Prostate gland (tissue), 2 donors: ENCODE measurements at regions of chr14 and their contacts with region 1.

Region 1: GRCh38 chr14:62126879-62127478 is 364.8 kb downstream of the SNAPC1 start:
- DNase-seq: no peak
- H3K4me3 ChIP-seq: no peak overlapping the region
- H3K27ac ChIP-seq: no peak overlapping the region
- H3K4me1 ChIP-seq: no peaks in the 10 kb centered on the region
- H3K27me3 ChIP-seq: no peaks in the 10 kb centered on the region
- CTCF ChIP-seq: peak in 3 of 4 experiments; percentile 37 to 70 (median 61)
- POLR2A ChIP-seq: no peak

Region 2: GRCh38 chr14:61456720-61457119 is 670.3 kb before region 1 on chr14:
- intact Hi-C with region 1: loop called (anchors 10 kb)
- DNase-seq: peak; percentile 88
- H3K4me3 ChIP-seq: no peak overlapping the region
- H3K27ac ChIP-seq: no peak overlapping the region
- H3K4me1 ChIP-seq: no peaks in the 10 kb centered on the region
- H3K27me3 ChIP-seq: no peaks in the 10 kb centered on the region
- CTCF ChIP-seq: peak; percentile 78 to 87 (median 83)
- POLR2A ChIP-seq: no peak

Region 3: DNA sequence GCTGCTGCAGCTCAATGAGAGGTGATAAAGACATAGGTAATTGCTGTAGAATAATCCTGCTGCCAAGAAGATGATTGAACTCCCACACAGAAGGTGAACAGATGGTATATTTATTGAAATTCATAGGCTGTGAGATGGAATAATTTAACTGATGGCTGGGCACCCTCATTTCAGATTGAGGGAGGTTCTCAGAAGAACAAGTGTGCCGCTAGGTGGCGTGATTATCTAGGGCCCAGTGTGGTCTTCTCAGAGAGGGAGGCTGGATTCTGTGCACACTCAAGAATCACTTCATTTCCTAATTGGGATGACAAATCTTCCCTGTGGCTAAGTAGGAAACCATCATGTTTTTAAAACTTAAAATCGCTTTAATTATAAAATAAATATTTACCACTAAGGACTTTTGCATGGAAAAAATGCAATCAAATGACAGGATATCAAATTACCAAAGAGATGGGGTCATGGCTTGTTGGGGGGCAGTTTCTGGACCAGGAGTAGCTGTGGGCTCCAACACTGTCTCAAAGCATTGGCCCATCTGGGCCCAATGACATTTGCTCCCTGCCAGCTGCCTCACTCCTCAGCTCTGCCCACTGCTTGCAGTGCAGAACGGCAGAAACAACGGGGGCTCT is 232.4 kb before region 1 on chr14:
- intact Hi-C with region 1: loop called (anchors 5 kb)
- DNase-seq: peak; percentile 35
- H3K4me3 ChIP-seq: no peak overlapping the region
- H3K27ac ChIP-seq: no peak overlapping the region
- H3K4me1 ChIP-seq: no peaks in the 10 kb centered on the region
- H3K27me3 ChIP-seq: no peaks in the 10 kb centered on the region
- CTCF ChIP-seq: peak in 3 of 4 experiments; percentile 34 to 42 (median 39)
- POLR2A ChIP-seq: no peak

Region 4: DNA sequence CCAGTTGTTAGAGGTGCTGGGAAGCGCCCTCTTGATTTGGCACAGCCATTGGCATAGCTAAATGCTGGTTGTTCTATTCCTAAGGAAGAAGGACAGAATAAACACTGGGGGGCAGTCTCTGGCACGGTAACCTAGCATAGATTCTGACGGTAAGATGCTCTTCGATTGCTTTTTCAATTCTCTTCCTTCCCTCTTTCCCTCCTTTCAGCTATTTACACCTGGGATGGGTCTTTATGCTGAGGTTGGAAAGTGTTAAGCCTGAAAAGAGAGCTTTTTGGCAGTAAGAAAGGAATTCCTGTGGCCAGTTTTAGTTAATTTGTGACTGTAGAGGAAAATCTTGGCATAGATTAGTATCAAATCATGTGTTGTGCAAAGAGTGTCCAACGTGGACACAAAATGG is 201.9 kb before region 1 on chr14:
- intact Hi-C with region 1: loop called (anchors 10 kb)
- DNase-seq: no peak
- H3K4me3 ChIP-seq: no peak overlapping the region
- H3K27ac ChIP-seq: no peak overlapping the region
- H3K4me1 ChIP-seq: no peaks in the 10 kb centered on the region
- H3K27me3 ChIP-seq: no peaks in the 10 kb centered on the region
- CTCF ChIP-seq: no peak
- POLR2A ChIP-seq: no peak